Left ventricle myocardium superior (tissue), 1 donor: ENCODE measurements at regions of chr9 and their contacts with region 1.

Region 1: DNA sequence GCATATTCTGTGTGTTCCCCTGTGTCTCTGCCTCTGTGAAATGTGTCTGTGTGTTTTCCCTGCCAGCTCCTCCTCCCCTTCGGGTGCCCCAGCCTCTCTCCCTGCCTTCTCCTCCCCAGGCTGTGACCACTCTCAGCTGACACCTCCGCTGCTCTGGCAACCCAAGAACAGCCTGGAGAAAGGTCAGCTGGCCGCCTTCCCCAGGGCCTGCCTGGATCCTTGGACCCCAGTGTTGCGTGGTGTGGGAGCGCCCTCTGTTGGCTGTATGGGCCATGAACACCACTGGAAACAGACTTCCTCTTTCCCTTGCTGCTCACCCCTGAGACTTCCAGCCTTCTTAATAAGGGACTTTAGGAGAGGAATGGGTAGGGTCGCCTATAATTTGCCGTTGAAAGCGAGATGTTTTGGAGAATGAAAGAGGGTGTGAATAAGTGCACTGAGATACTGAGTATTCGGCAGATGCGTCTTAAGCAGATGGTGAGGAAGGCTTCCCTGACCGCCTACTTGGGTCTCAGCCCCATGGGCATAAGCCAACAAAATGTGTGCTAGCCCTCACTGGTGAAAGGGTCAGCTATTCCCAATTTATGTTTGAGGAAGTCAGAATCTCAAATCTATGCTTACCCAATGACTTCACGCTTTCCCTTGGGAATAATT is 114.9 kb upstream of the TRIM32 start:
- DNase-seq: peak; percentile 96
- ATAC-seq: peak; percentile 98

Region 2: GRCh38 chr9:116156621-116157314 is 415.5 kb before region 1 on chr9:
- intact Hi-C with region 1: loop called (anchors 5 kb)
- DNase-seq: peak; percentile 83
- ATAC-seq: peak; percentile 93

Region 3: DNA sequence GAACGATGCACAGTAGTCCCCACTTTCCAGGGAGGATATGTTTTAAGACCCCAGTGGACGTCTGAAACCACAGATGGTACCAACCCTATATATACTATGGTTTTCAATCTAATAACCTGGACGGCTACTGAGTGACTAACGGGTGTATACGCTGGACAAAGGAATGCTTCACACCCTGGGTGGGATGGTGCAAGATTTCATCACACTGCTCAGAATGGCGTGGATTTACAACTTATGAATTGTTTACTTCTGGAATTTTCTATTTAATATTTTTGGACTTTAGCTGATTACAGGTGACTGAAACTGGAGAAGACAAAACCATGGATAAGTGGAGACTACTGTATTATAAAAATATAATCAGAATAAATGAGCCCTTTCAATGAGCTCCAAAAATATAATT is 32.7 kb before region 1 on chr9:
- intact Hi-C with region 1: no loop called
- DNase-seq: no peak
- ATAC-seq: no peak